KBM-7 (cell line): ENCODE measurements at regions of chr11 and their contacts with region 1.

Region 1: GRCh38 chr11:68257475-68258362 is 14.1 kb downstream of the C11orf24 start:
- DNase-seq: peak; percentile 98

Region 2: DNA sequence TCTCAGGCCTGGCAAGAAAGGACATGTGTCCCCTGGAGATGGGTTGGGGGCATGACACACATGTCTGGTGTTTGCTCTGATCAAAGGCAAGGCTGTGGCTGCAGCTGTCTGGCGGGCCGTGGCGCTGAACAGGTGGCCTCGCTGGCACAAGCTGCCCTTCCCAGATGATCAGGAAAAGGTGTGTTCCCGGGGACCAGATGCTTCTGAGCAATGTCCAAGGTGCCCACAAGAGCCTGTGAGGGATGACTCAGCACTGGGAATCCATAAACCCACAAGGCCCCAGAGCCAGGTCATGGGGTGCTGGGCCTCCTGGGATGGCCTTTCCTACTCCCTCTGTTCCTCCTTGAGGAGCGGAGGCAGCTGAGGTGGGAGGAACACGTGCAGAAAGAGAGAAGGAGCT is 45.0 kb after region 1 on chr11:
- in situ Hi-C with region 1: loop called (anchors 10 kb)
- DNase-seq: no peak